IMR-90 (cell line): ENCODE measurements at regions of chr1 and their contacts with region 1.

Region 1: GRCh38 chr1:219189021-219189824 is 15.5 kb downstream of the LYPLAL1 start:
- DNase-seq: peak; percentile 83
- ATAC-seq: peak; percentile 83
- H3K4me3 ChIP-seq: no peak overlapping the region
- H3K27ac ChIP-seq: no peak overlapping the region
- H3K4me1 ChIP-seq: peaks cover 5% of the 10 kb centered on the region
- H3K27me3 ChIP-seq: no peaks in the 10 kb centered on the region
- CTCF ChIP-seq: no peak
- POLR2A ChIP-seq: no peak
- RAD21 ChIP-seq: no peak

Region 2: GRCh38 chr1:219099307-219099706 is 89.9 kb before region 1 on chr1:
- CTCF ChIA-PET with region 1: no interaction called
- POLR2A ChIA-PET with region 1: no interaction called
- dilution Hi-C with region 1: no loop called
- in situ Hi-C with region 1: no loop called
- intact Hi-C with region 1: loop called (anchors 5 kb)
- DNase-seq: no peak
- ATAC-seq: no peak
- H3K4me3 ChIP-seq: no peak overlapping the region
- H3K27ac ChIP-seq: no peak overlapping the region
- H3K4me1 ChIP-seq: no peaks in the 10 kb centered on the region
- H3K27me3 ChIP-seq: no peaks in the 10 kb centered on the region
- CTCF ChIP-seq: no peak
- POLR2A ChIP-seq: no peak
- RAD21 ChIP-seq: no peak